OCI-LY7 (cell line): ENCODE measurements at regions of chr4 and their contacts with region 1.

Region 1: DNA sequence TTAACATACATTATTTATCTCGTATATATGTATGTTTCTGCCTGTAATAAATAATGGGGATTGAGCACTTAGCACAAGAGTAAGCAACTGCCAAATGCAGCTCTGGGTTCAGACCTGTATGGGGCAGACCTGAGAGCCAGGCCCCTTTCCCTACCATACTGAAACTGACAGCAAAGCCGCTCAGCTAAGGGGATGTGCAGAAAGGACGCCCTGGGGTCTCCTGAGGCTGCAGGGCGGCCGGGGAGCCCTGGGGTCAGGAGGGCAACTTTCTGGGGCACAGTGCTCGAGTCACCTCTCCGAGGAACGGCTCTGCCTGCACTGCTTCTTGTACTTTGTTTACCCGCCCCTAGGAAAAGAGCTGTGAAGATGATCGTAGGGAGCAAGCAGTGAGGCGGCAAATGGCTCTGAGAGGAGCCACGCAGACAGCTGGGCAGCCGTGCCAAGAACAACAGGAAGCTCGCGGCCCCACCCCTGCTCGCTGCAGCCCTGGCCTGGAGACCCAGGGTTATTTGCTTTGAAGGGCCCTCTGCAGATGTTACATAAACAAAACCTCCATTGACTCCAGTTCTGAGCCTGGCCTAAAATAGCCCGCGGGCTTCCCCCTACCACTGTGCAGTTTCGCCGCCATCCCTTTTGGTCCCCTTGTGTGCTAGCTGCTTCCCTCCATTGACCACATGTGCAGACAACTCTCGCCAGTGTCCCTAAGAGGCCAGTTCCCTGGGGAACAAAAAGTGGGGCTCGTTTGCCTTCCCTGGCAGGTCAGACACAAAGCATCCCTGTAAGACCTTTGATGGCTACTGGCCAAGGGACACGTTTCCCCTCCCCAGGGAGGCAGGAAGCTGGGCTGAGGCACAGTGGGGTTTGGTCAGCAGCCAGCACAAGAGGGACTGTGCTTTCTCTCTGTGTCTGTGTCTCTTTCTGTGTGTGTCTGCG is 111.3 kb upstream of the LNX1 start:
- DNase-seq: peak; percentile 87
- H3K4me3 ChIP-seq: peak overlapping the region; percentile 59
- H3K27ac ChIP-seq: peak overlapping the region; percentile 74
- H3K4me1 ChIP-seq: peaks cover 53% of the 10 kb centered on the region
- CTCF ChIP-seq: peak; percentile 64

Region 2: GRCh38 chr4:53196882-53197771 is 505.5 kb before region 1 on chr4:
- CTCF ChIA-PET with region 1: no interaction called
- POLR2A ChIA-PET with region 1: interaction called, 4 read pairs
- intact Hi-C with region 1: loop called (anchors 1 kb)
- DNase-seq: peak; percentile 80
- H3K4me3 ChIP-seq: no peak overlapping the region
- H3K27ac ChIP-seq: no peak overlapping the region
- H3K4me1 ChIP-seq: no peaks in the 10 kb centered on the region
- CTCF ChIP-seq: peak; percentile 95

Region 3: DNA sequence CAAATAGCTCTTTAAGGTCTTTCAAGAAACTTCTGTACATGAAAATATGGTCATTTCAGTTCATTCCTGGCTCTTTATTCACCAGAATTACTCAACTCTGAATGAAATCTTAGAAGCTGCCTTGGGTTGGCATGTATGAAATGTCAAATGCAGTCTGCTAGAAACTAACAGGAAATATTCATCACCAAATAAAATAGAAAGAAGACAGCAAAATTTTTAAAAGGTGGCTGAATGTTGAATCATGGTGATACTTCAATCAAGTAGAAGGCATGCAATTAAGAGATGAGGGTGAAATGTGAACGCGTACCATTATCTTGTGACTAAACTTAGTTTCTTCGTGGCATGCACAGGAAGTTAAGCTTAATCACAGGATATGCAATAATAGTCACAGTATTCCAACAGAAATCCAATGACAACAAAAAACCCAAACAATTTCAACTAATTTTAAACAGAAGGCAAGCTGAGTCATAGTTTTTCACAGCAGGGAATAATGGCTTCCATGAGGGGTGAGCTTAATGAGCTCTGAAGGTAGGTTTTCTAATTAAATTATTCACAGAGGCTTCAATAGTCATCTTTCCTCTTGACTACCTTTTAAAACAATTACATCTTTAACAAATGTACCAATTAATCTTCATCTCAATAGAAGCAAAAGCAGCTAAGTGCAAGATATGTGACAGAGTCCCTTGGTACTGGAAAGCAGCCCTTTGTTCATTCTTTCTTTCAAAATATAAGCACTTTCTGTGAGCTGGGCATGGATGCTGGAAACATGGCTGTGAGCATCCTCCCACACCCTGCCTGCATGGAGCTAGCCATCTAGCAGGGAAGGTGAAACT is 381.2 kb before region 1 on chr4:
- CTCF ChIA-PET with region 1: no interaction called
- POLR2A ChIA-PET with region 1: no interaction called
- intact Hi-C with region 1: no loop called
- DNase-seq: no peak
- H3K4me3 ChIP-seq: no peak overlapping the region
- H3K27ac ChIP-seq: no peak overlapping the region
- H3K4me1 ChIP-seq: no peaks in the 10 kb centered on the region
- CTCF ChIP-seq: no peak

Region 4: DNA sequence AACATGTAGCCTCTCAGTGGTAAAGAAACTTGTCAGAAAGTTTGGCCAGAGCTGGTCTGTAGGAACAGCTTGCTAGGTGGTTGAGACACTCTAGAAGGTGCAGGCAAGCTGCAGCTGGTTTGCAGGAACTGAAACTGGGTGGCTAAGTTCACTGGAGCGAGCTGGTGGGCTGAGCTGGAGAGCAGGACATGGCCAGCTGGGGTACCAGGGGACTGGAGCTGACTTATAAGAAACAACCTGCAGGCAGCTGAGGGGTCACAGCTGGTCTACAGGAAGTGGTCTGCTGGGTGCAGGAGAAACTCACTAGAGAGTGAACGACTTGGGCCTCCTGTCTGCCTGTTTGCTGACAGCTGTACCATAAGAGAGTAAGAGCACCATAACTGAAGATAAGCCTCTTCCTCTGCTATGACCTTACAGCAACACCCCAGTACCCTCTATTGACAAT is 45.8 kb after region 1 on chr4:
- CTCF ChIA-PET with region 1: interaction called, 11 read pairs
- POLR2A ChIA-PET with region 1: interaction called, 14 read pairs
- intact Hi-C with region 1: loop called (anchors 1 kb)
- DNase-seq: peak; percentile 99
- H3K4me3 ChIP-seq: peak overlapping the region; percentile 22
- H3K27ac ChIP-seq: peak overlapping the region; percentile 93
- H3K4me1 ChIP-seq: peaks cover 84% of the 10 kb centered on the region
- CTCF ChIP-seq: no peak

Region 5: DNA sequence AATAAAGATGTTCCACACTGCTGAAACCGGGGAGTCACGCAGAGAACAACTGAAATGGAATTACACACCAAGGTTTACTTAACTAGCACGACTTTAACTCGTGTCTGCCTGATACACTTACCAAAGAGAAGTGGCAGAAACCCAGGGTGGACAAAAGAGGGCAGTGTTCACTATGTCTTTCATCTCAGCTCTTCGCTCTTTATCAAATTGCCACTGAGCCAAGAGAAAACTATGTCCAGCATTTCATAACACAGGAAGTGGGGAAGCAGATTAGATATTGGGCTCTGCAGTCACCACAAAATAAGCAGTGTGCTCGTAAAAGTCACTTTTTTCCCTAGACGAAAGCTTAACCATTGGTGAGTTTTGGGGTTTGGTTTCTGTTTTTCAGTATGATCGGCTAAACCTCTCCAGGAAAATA is 206.1 kb after region 1 on chr4:
- CTCF ChIA-PET with region 1: interaction called, 5 read pairs
- POLR2A ChIA-PET with region 1: no interaction called
- intact Hi-C with region 1: loop called (anchors 5 kb)
- DNase-seq: peak; percentile 72
- H3K4me3 ChIP-seq: no peak overlapping the region
- H3K27ac ChIP-seq: no peak overlapping the region
- H3K4me1 ChIP-seq: peaks cover 21% of the 10 kb centered on the region
- CTCF ChIP-seq: peak; percentile 91

Region 6: GRCh38 chr4:54233277-54233696 is 530.7 kb after region 1 on chr4:
- CTCF ChIA-PET with region 1: interaction called, 4 read pairs
- POLR2A ChIA-PET with region 1: no interaction called
- intact Hi-C with region 1: loop called (anchors 5 kb)
- DNase-seq: no peak
- H3K4me3 ChIP-seq: no peak overlapping the region
- H3K27ac ChIP-seq: no peak overlapping the region
- H3K4me1 ChIP-seq: no peaks in the 10 kb centered on the region
- CTCF ChIP-seq: peak; percentile 71